GM12878 (cell line): ENCODE measurements at regions of chr6 and their contacts with region 1.

Region 1: GRCh38 chr6:34656378-34657036 is 40.1 kb downstream of the ILRUN start:
- DNase-seq: peak; percentile 97
- ATAC-seq: peak; percentile 89
- H3K4me3 ChIP-seq: peak overlapping the region; percentile 58; the same call in 1 of the 2 replicates
- H3K27ac ChIP-seq: peak overlapping the region; percentile 100
- H3K4me1 ChIP-seq: peaks cover 60% of the 10 kb centered on the region
- H3K27me3 ChIP-seq: no peaks in the 10 kb centered on the region
- CTCF ChIP-seq: no peak
- EP300 ChIP-seq: peak; percentile 95 to 98
- POLR2A ChIP-seq: peak; percentile 57
- RAD21 ChIP-seq: peak; percentile 19; the same call in 1 of the 2 replicates

Region 2: GRCh38 chr6:34638834-34639736 is 17.4 kb before region 1 on chr6:
- CTCF ChIA-PET with region 1: interaction called, 131 read pairs
- POLR2A ChIA-PET with region 1: interaction called, 246 read pairs
- RAD21 ChIA-PET with region 1: interaction called, 239 read pairs
- SMC1A ChIA-PET with region 1: interaction called, 251 read pairs
- in situ Hi-C with region 1: no loop called
- intact Hi-C with region 1: loop called (anchors 1 kb)
- DNase-seq: peak; percentile 87
- ATAC-seq: peak; percentile 86
- H3K4me3 ChIP-seq: no peak overlapping the region
- H3K27ac ChIP-seq: peak overlapping the region; percentile 93
- H3K4me1 ChIP-seq: peaks cover 27% of the 10 kb centered on the region
- H3K27me3 ChIP-seq: no peaks in the 10 kb centered on the region
- CTCF ChIP-seq: no peak
- EP300 ChIP-seq: peak; percentile 79 to 80
- POLR2A ChIP-seq: no peak
- RAD21 ChIP-seq: no peak

Region 3: GRCh38 chr6:34671801-34672656 is 15.5 kb after region 1 on chr6:
- CTCF ChIA-PET with region 1: interaction called, 56 read pairs
- POLR2A ChIA-PET with region 1: interaction called, 329 read pairs
- RAD21 ChIA-PET with region 1: interaction called, 183 read pairs
- SMC1A ChIA-PET with region 1: interaction called, 196 read pairs
- in situ Hi-C with region 1: no loop called
- intact Hi-C with region 1: loop called (anchors 1 kb)
- DNase-seq: peak; percentile 84
- ATAC-seq: peak; percentile 88
- H3K4me3 ChIP-seq: peak overlapping the region; percentile 46
- H3K27ac ChIP-seq: peak overlapping the region; percentile 92
- H3K4me1 ChIP-seq: peaks cover 38% of the 10 kb centered on the region
- H3K27me3 ChIP-seq: no peaks in the 10 kb centered on the region
- CTCF ChIP-seq: no peak
- EP300 ChIP-seq: peak; percentile 39 to 44; a peak in 2 of 4 replicates
- POLR2A ChIP-seq: peak; percentile 35; the same call in 1 of the 2 replicates
- RAD21 ChIP-seq: no peak

Region 4: GRCh38 chr6:34680802-34681515 is 24.5 kb after region 1 on chr6:
- CTCF ChIA-PET with region 1: interaction called, 56 read pairs
- POLR2A ChIA-PET with region 1: interaction called, 329 read pairs
- RAD21 ChIA-PET with region 1: interaction called, 183 read pairs
- SMC1A ChIA-PET with region 1: interaction called, 196 read pairs
- in situ Hi-C with region 1: no loop called
- intact Hi-C with region 1: no loop called
- DNase-seq: no peak
- ATAC-seq: peak; percentile 85
- H3K4me3 ChIP-seq: peak overlapping the region; percentile 49; the same call in 1 of the 2 replicates
- H3K27ac ChIP-seq: peak overlapping the region; percentile 88
- H3K4me1 ChIP-seq: peaks cover 20% of the 10 kb centered on the region; the same call in 1 of the 2 replicates
- H3K27me3 ChIP-seq: no peaks in the 10 kb centered on the region
- CTCF ChIP-seq: no peak
- EP300 ChIP-seq: peak; percentile 59 to 78; a peak in 2 of 4 replicates
- POLR2A ChIP-seq: no peak
- RAD21 ChIP-seq: no peak

Region 5: GRCh38 chr6:34757687-34758274 is 101.3 kb after region 1 on chr6:
- CTCF ChIA-PET with region 1: interaction called, 8 read pairs
- POLR2A ChIA-PET with region 1: interaction called, 3 read pairs
- RAD21 ChIA-PET with region 1: interaction called, 12 read pairs
- SMC1A ChIA-PET with region 1: interaction called, 9 read pairs
- in situ Hi-C with region 1: no loop called
- intact Hi-C with region 1: no loop called
- DNase-seq: no peak
- ATAC-seq: no peak
- H3K4me3 ChIP-seq: peak overlapping the region; percentile 91
- H3K27ac ChIP-seq: peak overlapping the region; percentile 86
- H3K4me1 ChIP-seq: 0 out of 2 replicates have a peak, but pooled peaks cover 5% of the 10 kb centered on the region
- H3K27me3 ChIP-seq: no peaks in the 10 kb centered on the region
- CTCF ChIP-seq: no peak
- EP300 ChIP-seq: no peak
- POLR2A ChIP-seq: no peak
- RAD21 ChIP-seq: no peak

Region 6: DNA sequence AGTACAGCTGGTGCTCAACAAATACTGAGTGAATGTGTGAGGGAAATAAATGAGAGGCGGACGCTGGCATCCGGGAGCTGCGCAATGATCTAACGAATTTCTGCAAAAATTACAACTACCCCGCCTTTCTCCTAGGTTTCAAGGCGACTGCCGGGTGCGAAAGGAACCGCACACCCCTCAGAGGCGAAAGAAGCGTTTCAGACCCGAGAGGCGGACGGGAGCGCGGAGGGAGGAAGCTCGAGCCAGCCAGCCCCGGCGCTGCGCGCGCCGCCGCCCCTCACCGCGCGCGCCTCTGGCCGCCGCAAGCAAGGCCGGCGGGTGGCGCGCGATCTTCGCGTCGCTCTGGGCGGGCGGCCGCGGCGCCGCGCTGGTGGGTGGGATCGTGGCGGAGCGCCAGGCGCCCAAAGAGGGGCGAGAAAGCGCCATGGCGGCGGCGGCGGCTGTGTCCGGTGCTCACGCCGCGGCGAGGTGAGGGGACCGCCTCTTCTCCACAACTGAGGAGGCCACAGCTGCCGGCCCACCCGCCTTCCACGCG is 135.3 kb after region 1 on chr6 and contains the start of gene BLTP3A:
- CTCF ChIA-PET with region 1: interaction called, 3 read pairs
- POLR2A ChIA-PET with region 1: interaction called, 10 read pairs
- RAD21 ChIA-PET with region 1: interaction called, 9 read pairs
- SMC1A ChIA-PET with region 1: interaction called, 7 read pairs
- in situ Hi-C with region 1: no loop called
- intact Hi-C with region 1: no loop called
- DNase-seq: no peak
- ATAC-seq: peak; percentile 95
- H3K4me3 ChIP-seq: peak within 1 kb of the TSS; percentile 88
- H3K27ac ChIP-seq: peak within 1 kb of the TSS; percentile 79
- H3K4me1 ChIP-seq: no peaks in the 10 kb centered on the region; the same call in 1 of the 2 replicates
- H3K27me3 ChIP-seq: no peaks in the 10 kb centered on the region
- CTCF ChIP-seq: peak in 1 of 3 experiments; percentile 44; a peak in 1 of 6 replicates
- EP300 ChIP-seq: no peak
- POLR2A ChIP-seq: peak; percentile 89
- RAD21 ChIP-seq: peak; percentile 50
- polyA plus RNA-seq, gene BLTP3A: 2.7 to 2.8 TPM

Region 7: GRCh38 chr6:34887753-34888513 is 231.4 kb after region 1 on chr6 and contains the start of gene TAF11:
- CTCF ChIA-PET with region 1: no interaction called
- POLR2A ChIA-PET with region 1: no interaction called
- RAD21 ChIA-PET with region 1: no interaction called
- SMC1A ChIA-PET with region 1: interaction called, 4 read pairs
- in situ Hi-C with region 1: no loop called
- intact Hi-C with region 1: loop called (anchors 10 kb)
- DNase-seq: peak; percentile 61
- ATAC-seq: peak; percentile 89
- H3K4me3 ChIP-seq: peak within 1 kb of the TSS; percentile 97
- H3K27ac ChIP-seq: peak within 1 kb of the TSS; percentile 88
- H3K4me1 ChIP-seq: peaks cover 5% of the 10 kb centered on the region
- H3K27me3 ChIP-seq: no peaks in the 10 kb centered on the region
- CTCF ChIP-seq: no peak
- EP300 ChIP-seq: 0 out of 4 replicates have a peak, but pooled peaks of 1 of the 2 experiments have one; percentile 12
- POLR2A ChIP-seq: peak; percentile 97
- RAD21 ChIP-seq: no peak
- polyA plus RNA-seq, gene TAF11: 24.6 to 31.7 TPM